IMR-90 (cell line): ENCODE measurements at regions of chr3 and their contacts with region 1.

Region 1: DNA sequence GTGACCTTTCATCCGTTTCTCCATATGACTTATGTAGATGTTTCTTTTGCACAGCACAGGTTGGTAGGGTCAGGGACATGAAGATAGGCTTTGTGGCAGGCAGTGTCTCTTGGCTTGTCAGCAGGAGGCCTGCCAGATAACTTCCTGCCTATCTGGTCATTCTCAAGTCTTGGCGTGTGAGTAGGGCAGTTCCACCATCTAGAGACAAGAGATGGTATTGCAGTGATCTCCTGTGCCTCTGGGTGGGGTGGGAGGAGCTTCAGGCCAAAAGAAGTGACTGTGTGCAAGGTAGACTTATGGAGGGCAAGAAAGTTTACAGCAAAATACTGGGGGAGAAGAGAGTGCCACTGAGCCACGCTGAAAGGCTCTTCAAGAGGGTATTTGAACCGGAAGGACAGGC is 11.0 kb downstream of the TEX264 start:
- DNase-seq: peak; percentile 88
- ATAC-seq: peak; percentile 99
- H3K4me3 ChIP-seq: no peak overlapping the region
- H3K27ac ChIP-seq: no peak overlapping the region
- H3K4me1 ChIP-seq: peaks cover 3% of the 10 kb centered on the region; the same call in 1 of the 2 replicates
- H3K27me3 ChIP-seq: no peaks in the 10 kb centered on the region
- CTCF ChIP-seq: peak; percentile 92
- POLR2A ChIP-seq: no peak
- RAD21 ChIP-seq: peak; percentile 93

Region 2: GRCh38 chr3:51391075-51391567 is 291.0 kb before region 1 on chr3 and contains the start of gene RBM15B:
- CTCF ChIA-PET with region 1: interaction called, 3 read pairs
- POLR2A ChIA-PET with region 1: no interaction called
- dilution Hi-C with region 1: no loop called
- in situ Hi-C with region 1: no loop called
- intact Hi-C with region 1: loop called (anchors 1 kb)
- DNase-seq: peak; percentile 96
- ATAC-seq: peak; percentile 93
- H3K4me3 ChIP-seq: peak within 1 kb of the TSS; percentile 70
- H3K27ac ChIP-seq: peak within 1 kb of the TSS; percentile 85
- H3K4me1 ChIP-seq: peaks cover 34% of the 10 kb centered on the region
- H3K27me3 ChIP-seq: no peaks in the 10 kb centered on the region
- CTCF ChIP-seq: peak; percentile 95
- POLR2A ChIP-seq: peak; percentile 96
- RAD21 ChIP-seq: peak; percentile 37; the same call in 1 of the 2 replicates
- total RNA-seq, gene RBM15B: 17.2 and 17.4 TPM in 2 replicates

Region 3: GRCh38 chr3:51605938-51606337 is 76.1 kb before region 1 on chr3:
- CTCF ChIA-PET with region 1: no interaction called
- POLR2A ChIA-PET with region 1: no interaction called
- dilution Hi-C with region 1: no loop called
- in situ Hi-C with region 1: no loop called
- intact Hi-C with region 1: no loop called
- DNase-seq: no peak
- ATAC-seq: no peak
- H3K4me3 ChIP-seq: no peak overlapping the region
- H3K27ac ChIP-seq: no peak overlapping the region
- H3K4me1 ChIP-seq: no peaks in the 10 kb centered on the region; the same call in 1 of the 2 replicates
- H3K27me3 ChIP-seq: no peaks in the 10 kb centered on the region
- CTCF ChIP-seq: no peak
- POLR2A ChIP-seq: no peak
- RAD21 ChIP-seq: no peak